ENCODE measurements at regions of chrX and their contacts with region 1.

Region 1: DNA sequence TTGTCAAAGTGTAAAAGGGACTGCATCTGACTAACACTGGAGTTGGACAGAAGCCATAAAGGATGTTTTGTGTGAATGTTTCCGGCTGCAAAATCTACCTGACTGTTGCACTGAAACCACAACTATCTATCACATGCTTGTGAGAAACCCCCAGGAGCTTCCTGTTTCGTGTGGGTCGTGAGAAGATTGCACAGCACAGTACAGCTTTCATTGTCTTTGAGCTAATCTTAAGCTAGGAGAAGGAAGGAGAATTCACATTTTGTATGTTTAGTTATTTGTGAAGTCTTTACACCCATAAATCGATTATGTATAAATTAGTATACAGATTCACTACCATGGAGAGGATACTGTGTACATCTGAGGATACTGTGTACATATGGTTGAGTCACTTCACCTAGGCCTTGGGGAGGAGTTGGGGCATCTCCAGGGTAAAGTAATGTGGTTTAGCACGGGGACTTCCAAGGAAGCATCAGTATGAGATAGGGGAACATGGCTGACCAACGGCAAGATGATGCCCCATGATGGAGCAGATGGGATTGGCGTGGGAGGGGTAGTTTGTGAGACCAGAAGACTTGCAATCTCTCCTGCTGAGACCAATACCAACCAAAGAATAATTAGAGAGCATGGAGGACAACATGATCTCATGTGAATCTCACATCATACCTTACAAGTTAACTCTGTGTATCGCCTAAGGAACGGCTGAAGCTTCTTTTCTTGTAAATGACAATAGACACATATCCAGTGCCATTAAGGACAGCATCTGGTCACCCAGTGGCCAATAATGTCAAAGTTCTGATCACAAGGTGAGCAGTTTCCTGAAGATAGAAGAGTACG is 43.1 kb upstream of the FAM9C start:
- DNase-seq: peak; percentile 99
- ATAC-seq: peak; percentile 54
- H3K4me3 ChIP-seq: no peak overlapping the region; the same call in 1 of the 2 replicates
- H3K27ac ChIP-seq: peak overlapping the region; percentile 100
- H3K4me1 ChIP-seq: peaks cover 89% of the 10 kb centered on the region
- H3K27me3 ChIP-seq: no peaks in the 10 kb centered on the region
- CTCF ChIP-seq: no peak
- EP300 ChIP-seq: peak; percentile 71 to 90
- POLR2A ChIP-seq: 0 out of 2 replicates have a peak, but pooled peaks have one; percentile 45
- RAD21 ChIP-seq: 0 out of 2 replicates have a peak, but pooled peaks have one; percentile 15

Region 2: GRCh38 chrX:11758400-11759171 is 1329.0 kb before region 1 on chrX:
- CTCF ChIA-PET with region 1: no interaction called
- POLR2A ChIA-PET with region 1: no interaction called
- RAD21 ChIA-PET with region 1: no interaction called
- SMC1A ChIA-PET with region 1: no interaction called
- in situ Hi-C with region 1: no loop called
- intact Hi-C with region 1: loop called (anchors 10 kb)
- DNase-seq: no peak
- ATAC-seq: peak; percentile 44
- H3K4me3 ChIP-seq: peak overlapping the region; percentile 60
- H3K27ac ChIP-seq: peak overlapping the region; percentile 90
- H3K4me1 ChIP-seq: peaks cover 7% of the 10 kb centered on the region; the same call in 1 of the 2 replicates
- H3K27me3 ChIP-seq: no peaks in the 10 kb centered on the region
- CTCF ChIP-seq: peak; percentile 34 to 68 (median 59); a peak in 4 of 6 replicates
- EP300 ChIP-seq: peak in 1 of 2 experiments; percentile 10; a peak in 1 of 4 replicates
- POLR2A ChIP-seq: no peak; the same call in 1 of the 2 replicates
- RAD21 ChIP-seq: peak; percentile 43

Region 3: GRCh38 chrX:12894074-12895030 is 193.2 kb before region 1 on chrX:
- CTCF ChIA-PET with region 1: no interaction called
- POLR2A ChIA-PET with region 1: no interaction called
- RAD21 ChIA-PET with region 1: no interaction called
- SMC1A ChIA-PET with region 1: interaction called, 3 read pairs
- in situ Hi-C with region 1: no loop called
- intact Hi-C with region 1: loop called (anchors 5 kb)
- DNase-seq: no peak
- ATAC-seq: peak; percentile 61
- H3K4me3 ChIP-seq: no peak overlapping the region
- H3K27ac ChIP-seq: no peak overlapping the region
- H3K4me1 ChIP-seq: peaks cover 43% of the 10 kb centered on the region
- H3K27me3 ChIP-seq: no peaks in the 10 kb centered on the region
- CTCF ChIP-seq: peak; percentile 84 to 88 (median 84)
- EP300 ChIP-seq: no peak
- POLR2A ChIP-seq: no peak
- RAD21 ChIP-seq: peak; percentile 96

Region 4: GRCh38 chrX:12919051-12919450 is 168.5 kb before region 1 on chrX:
- CTCF ChIA-PET with region 1: no interaction called
- POLR2A ChIA-PET with region 1: no interaction called
- RAD21 ChIA-PET with region 1: no interaction called
- SMC1A ChIA-PET with region 1: no interaction called
- in situ Hi-C with region 1: no loop called
- intact Hi-C with region 1: no loop called
- DNase-seq: no peak
- ATAC-seq: no peak
- H3K4me3 ChIP-seq: no peak overlapping the region
- H3K27ac ChIP-seq: no peak overlapping the region
- H3K4me1 ChIP-seq: no peaks in the 10 kb centered on the region
- H3K27me3 ChIP-seq: no peaks in the 10 kb centered on the region; a peak in 1 of 4 replicates
- CTCF ChIP-seq: no peak
- EP300 ChIP-seq: no peak
- POLR2A ChIP-seq: no peak
- RAD21 ChIP-seq: no peak

Region 5: GRCh38 chrX:13005661-13006473 is 81.7 kb before region 1 on chrX:
- CTCF ChIA-PET with region 1: interaction called, 72 read pairs
- POLR2A ChIA-PET with region 1: interaction called, 280 read pairs
- RAD21 ChIA-PET with region 1: interaction called, 689 read pairs
- SMC1A ChIA-PET with region 1: interaction called, 847 read pairs
- in situ Hi-C with region 1: loop called (anchors 5 kb)
- intact Hi-C with region 1: loop called (anchors 1 kb)
- DNase-seq: peak; percentile 89
- ATAC-seq: peak; percentile 55
- H3K4me3 ChIP-seq: peak overlapping the region; percentile 28; the same call in 1 of the 2 replicates
- H3K27ac ChIP-seq: peak overlapping the region; percentile 91
- H3K4me1 ChIP-seq: peaks cover 83% of the 10 kb centered on the region
- H3K27me3 ChIP-seq: no peaks in the 10 kb centered on the region
- CTCF ChIP-seq: no peak
- EP300 ChIP-seq: peak; percentile 96
- POLR2A ChIP-seq: no peak
- RAD21 ChIP-seq: no peak; the same call in 1 of the 2 replicates

Region 6: DNA sequence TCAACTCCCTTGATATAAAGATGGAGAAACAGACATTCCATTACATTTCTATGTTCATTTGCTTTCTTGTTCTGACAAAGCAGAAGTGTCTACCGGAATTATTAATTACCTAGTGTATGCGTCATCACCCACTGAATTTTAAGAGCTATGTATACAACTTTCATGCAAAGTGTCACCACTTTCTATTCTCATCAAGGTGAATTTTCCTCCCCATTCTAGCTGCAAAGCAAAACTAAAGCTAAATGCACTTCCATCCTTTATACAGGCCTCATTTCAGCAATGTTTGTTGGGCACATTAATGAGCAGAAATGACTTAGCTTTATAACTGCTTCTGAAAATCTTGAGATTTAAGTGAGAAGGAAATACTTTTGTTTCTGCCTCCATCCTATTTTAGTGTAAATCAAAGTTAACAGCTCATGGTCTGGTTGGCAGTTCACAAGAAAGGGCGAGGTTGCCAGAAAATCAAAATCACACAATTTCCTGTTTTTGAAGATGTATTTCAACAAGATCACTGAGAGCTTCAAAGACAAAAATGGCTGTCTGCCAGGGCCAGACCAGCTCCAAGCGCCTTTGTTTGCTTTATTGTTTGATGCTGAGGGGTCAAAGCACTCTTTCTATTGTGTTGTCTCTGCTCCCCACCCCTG is 35.9 kb before region 1 on chrX:
- CTCF ChIA-PET with region 1: interaction called, 9 read pairs
- POLR2A ChIA-PET with region 1: interaction called, 14 read pairs
- RAD21 ChIA-PET with region 1: interaction called, 100 read pairs
- SMC1A ChIA-PET with region 1: interaction called, 214 read pairs
- in situ Hi-C with region 1: no loop called
- intact Hi-C with region 1: loop called (anchors 1 kb)
- DNase-seq: peak; percentile 71
- ATAC-seq: peak; percentile 71
- H3K4me3 ChIP-seq: no peak overlapping the region
- H3K27ac ChIP-seq: peak overlapping the region; percentile 69
- H3K4me1 ChIP-seq: peaks cover 48% of the 10 kb centered on the region
- H3K27me3 ChIP-seq: no peaks in the 10 kb centered on the region
- CTCF ChIP-seq: no peak
- EP300 ChIP-seq: peak; percentile 85 to 95; a peak in 3 of 4 replicates
- POLR2A ChIP-seq: no peak
- RAD21 ChIP-seq: no peak

Region 7: GRCh38 chrX:13180807-13181206 is 93.3 kb after region 1 on chrX:
- CTCF ChIA-PET with region 1: no interaction called
- POLR2A ChIA-PET with region 1: no interaction called
- RAD21 ChIA-PET with region 1: no interaction called
- SMC1A ChIA-PET with region 1: no interaction called
- in situ Hi-C with region 1: no loop called
- intact Hi-C with region 1: no loop called
- DNase-seq: no peak
- ATAC-seq: no peak
- H3K4me3 ChIP-seq: no peak overlapping the region
- H3K27ac ChIP-seq: no peak overlapping the region
- H3K4me1 ChIP-seq: no peaks in the 10 kb centered on the region
- H3K27me3 ChIP-seq: no peaks in the 10 kb centered on the region
- CTCF ChIP-seq: no peak
- EP300 ChIP-seq: no peak
- POLR2A ChIP-seq: no peak
- RAD21 ChIP-seq: no peak

Region 8: GRCh38 chrX:13341491-13342101 is 254.1 kb after region 1 on chrX:
- CTCF ChIA-PET with region 1: interaction called, 6 read pairs
- POLR2A ChIA-PET with region 1: no interaction called
- RAD21 ChIA-PET with region 1: interaction called, 3 read pairs
- SMC1A ChIA-PET with region 1: interaction called, 3 read pairs
- in situ Hi-C with region 1: no loop called
- intact Hi-C with region 1: loop called (anchors 1 kb)
- DNase-seq: no peak
- ATAC-seq: peak; percentile 48
- H3K4me3 ChIP-seq: no peak overlapping the region
- H3K27ac ChIP-seq: no peak overlapping the region
- H3K4me1 ChIP-seq: peaks cover 3% of the 10 kb centered on the region; the same call in 1 of the 2 replicates
- H3K27me3 ChIP-seq: no peaks in the 10 kb centered on the region
- CTCF ChIP-seq: peak in 1 of 3 experiments; percentile 10; a peak in 1 of 6 replicates
- EP300 ChIP-seq: no peak
- POLR2A ChIP-seq: no peak
- RAD21 ChIP-seq: peak; percentile 42

Region 9: DNA sequence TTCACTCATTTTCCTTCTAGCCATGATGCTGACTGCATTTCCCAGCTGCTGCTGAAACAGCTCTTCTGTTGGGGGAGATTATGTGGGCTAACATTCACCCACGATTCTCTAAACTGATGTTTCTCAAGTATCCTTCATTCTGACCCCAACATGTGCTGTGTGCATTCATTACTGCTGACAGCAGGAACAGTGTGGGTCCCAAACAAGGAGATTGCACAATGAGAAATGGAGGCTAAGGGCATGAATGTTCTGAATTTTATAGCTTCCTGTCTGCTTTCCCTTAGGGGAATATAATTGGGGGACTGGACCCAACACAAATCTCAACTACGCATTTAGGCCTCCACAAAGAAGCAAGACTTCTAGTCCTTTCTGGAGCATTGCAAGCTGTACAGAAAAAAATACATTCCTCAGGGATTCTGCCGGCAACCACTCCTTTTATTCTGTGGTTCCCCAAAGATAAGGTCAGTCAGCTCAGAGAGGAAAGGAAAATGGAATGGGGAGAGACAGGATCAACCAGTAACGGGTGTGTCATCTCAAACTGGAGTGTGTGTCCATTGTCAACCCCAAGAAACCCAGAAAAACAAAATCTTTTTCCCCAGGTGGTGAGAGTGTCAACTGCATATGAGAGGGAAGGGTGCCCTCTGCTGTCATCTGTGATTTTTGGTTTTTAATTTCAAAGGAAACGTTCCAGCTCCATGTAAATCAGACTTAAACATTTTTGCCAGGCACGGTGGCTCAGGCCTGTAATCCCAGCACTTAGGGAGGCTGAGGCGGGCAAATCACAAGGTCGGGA is 400.4 kb after region 1 on chrX:
- CTCF ChIA-PET with region 1: interaction called, 101 read pairs
- POLR2A ChIA-PET with region 1: interaction called, 3 read pairs
- RAD21 ChIA-PET with region 1: interaction called, 145 read pairs
- SMC1A ChIA-PET with region 1: interaction called, 127 read pairs
- in situ Hi-C with region 1: no loop called
- intact Hi-C with region 1: loop called (anchors 1 kb)
- DNase-seq: peak; percentile 72
- ATAC-seq: peak; percentile 86
- H3K4me3 ChIP-seq: no peak overlapping the region
- H3K27ac ChIP-seq: peak overlapping the region; percentile 95
- H3K4me1 ChIP-seq: peaks cover 16% of the 10 kb centered on the region
- H3K27me3 ChIP-seq: no peaks in the 10 kb centered on the region
- CTCF ChIP-seq: peak; percentile 56 to 80 (median 62)
- EP300 ChIP-seq: no peak
- POLR2A ChIP-seq: no peak
- RAD21 ChIP-seq: peak; percentile 98

Measured in GM12878 (cell line).